ENCODE measurements at regions of chr4 and their contacts with region 1.

Region 1: DNA sequence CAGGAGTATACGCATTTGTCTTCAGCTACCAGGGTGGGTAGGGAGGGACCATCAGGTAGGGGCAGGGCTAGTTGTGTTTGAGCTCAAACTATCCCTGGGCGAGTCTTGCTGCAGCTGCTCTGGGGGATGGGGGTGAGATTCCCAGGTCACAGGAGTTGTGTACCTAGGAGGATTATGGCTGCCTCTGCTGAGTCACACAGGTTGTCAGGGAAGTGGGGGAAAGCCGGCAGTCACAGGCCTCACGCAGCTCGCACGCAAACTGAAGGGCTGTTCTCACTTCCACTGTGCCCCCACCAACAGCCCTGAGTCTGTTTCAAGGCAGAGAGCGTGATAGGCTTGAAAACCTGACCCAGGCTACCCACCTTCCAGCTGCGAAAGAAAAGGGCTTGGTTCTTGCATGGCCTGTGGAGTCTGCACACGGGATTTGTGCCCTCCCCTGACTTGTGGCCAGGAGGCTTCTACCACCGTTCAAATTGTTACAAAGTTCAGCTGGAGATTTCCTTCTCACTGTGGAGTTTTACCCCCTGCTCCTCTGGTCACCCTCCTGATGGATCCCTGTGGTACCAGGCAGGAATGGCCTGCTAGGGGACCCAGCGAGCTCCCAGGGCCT is 63.8 kb downstream of the ARFIP1 start:
- DNase-seq: peak in 1 of 2 experiments; percentile 44
- H3K4me3 ChIP-seq: no peak overlapping the region
- H3K27ac ChIP-seq: no peak overlapping the region
- H3K4me1 ChIP-seq: no peaks in the 10 kb centered on the region
- H3K27me3 ChIP-seq: no peaks in the 10 kb centered on the region
- CTCF ChIP-seq: no peak

Region 2: GRCh38 chr4:152014280-152014679 is 829.3 kb before region 1 on chr4:
- CTCF ChIA-PET with region 1: no interaction called
- POLR2A ChIA-PET with region 1: no interaction called
- intact Hi-C with region 1: no loop called
- DNase-seq: no peak
- H3K4me3 ChIP-seq: no peak overlapping the region
- H3K27ac ChIP-seq: no peak overlapping the region
- H3K4me1 ChIP-seq: no peaks in the 10 kb centered on the region
- H3K27me3 ChIP-seq: no peaks in the 10 kb centered on the region
- CTCF ChIP-seq: no peak

Region 3: GRCh38 chr4:152856960-152857359 is 13.4 kb after region 1 on chr4:
- CTCF ChIA-PET with region 1: no interaction called
- POLR2A ChIA-PET with region 1: no interaction called
- intact Hi-C with region 1: no loop called
- DNase-seq: no peak
- H3K4me3 ChIP-seq: no peak overlapping the region
- H3K27ac ChIP-seq: no peak overlapping the region
- H3K4me1 ChIP-seq: peaks cover 10% of the 10 kb centered on the region; the same call in 1 of the 2 replicates
- H3K27me3 ChIP-seq: no peaks in the 10 kb centered on the region
- CTCF ChIP-seq: no peak

Region 4: DNA sequence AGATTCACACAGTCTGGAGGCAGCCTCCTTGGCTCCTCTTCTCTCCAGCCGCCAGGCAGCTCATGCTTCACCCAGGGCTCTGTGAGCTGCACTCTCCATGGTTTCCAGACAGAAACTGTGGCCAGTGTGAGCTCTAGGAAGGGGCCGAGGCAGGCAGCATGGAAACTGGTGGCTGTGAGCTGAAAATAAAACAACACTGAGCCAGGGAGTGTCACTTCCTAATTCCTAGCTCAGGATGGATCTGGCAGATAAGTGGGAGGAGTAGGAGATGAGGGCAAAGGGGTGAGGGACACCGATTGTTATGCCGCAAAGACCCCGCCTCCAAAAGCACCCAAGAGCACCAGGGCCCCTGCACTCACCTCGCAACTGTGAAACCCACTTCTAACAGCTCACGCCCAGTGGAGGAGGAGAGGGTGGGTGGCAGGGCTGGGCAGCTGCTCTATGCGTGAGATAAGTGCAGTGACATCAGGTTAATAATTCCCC is 162.4 kb after region 1 on chr4:
- CTCF ChIA-PET with region 1: no interaction called
- POLR2A ChIA-PET with region 1: no interaction called
- intact Hi-C with region 1: no loop called
- DNase-seq: no peak
- H3K4me3 ChIP-seq: no peak overlapping the region
- H3K27ac ChIP-seq: no peak overlapping the region
- H3K4me1 ChIP-seq: no peaks in the 10 kb centered on the region
- H3K27me3 ChIP-seq: no peaks in the 10 kb centered on the region
- CTCF ChIP-seq: no peak

Region 5: GRCh38 chr4:153409412-153409811 is 565.8 kb after region 1 on chr4:
- CTCF ChIA-PET with region 1: no interaction called
- POLR2A ChIA-PET with region 1: interaction called, 12 read pairs
- intact Hi-C with region 1: no loop called
- DNase-seq: no peak
- H3K4me3 ChIP-seq: no peak overlapping the region
- H3K27ac ChIP-seq: no peak overlapping the region
- H3K4me1 ChIP-seq: no peaks in the 10 kb centered on the region
- H3K27me3 ChIP-seq: no peaks in the 10 kb centered on the region
- CTCF ChIP-seq: no peak

Region 6: GRCh38 chr4:153643406-153644383 is 800.1 kb after region 1 on chr4:
- CTCF ChIA-PET with region 1: no interaction called
- POLR2A ChIA-PET with region 1: no interaction called
- intact Hi-C with region 1: loop called (anchors 10 kb)
- DNase-seq: peak in 1 of 2 experiments; percentile 47
- H3K4me3 ChIP-seq: no peak overlapping the region
- H3K27ac ChIP-seq: no peak overlapping the region
- H3K4me1 ChIP-seq: no peaks in the 10 kb centered on the region
- H3K27me3 ChIP-seq: no peaks in the 10 kb centered on the region
- CTCF ChIP-seq: peak; percentile 56; the same call in 1 of the 2 replicates

Measured in PC-9 (cell line).